Activated naive CD4-positive, alpha-beta T cell treated with anti-CD3 and anti-CD28 coated beads, Interleukin-2, amount 10 ng/mL, durations not matched to agents 7 days and 5 days (primary cell): ENCODE measurements at regions of chr14 and their contacts with region 1.

Region 1: GRCh38 chr14:61730756-61731373 is 31.4 kb upstream of the SNAPC1 start:
- DNase-seq: no peak
- H3K4me3 Mint-ChIP-seq: no peak overlapping the region
- H3K27ac Mint-ChIP-seq: no peak overlapping the region
- H3K4me1 Mint-ChIP-seq: peaks cover 39% of the 10 kb centered on the region
- H3K27me3 Mint-ChIP-seq: no peaks in the 10 kb centered on the region

Region 2: GRCh38 chr14:61475316-61475715 is 255.5 kb before region 1 on chr14:
- CTCF ChIA-PET with region 1: interaction called, 10 read pairs
- DNase-seq: no peak
- H3K4me3 Mint-ChIP-seq: peak overlapping the region; percentile 18
- H3K27ac Mint-ChIP-seq: peak overlapping the region; percentile 95
- H3K4me1 Mint-ChIP-seq: peaks cover 95% of the 10 kb centered on the region
- H3K27me3 Mint-ChIP-seq: no peaks in the 10 kb centered on the region